ENCODE measurements at regions of chr6 and their contacts with region 1.

Region 1: GRCh38 chr6:87472525-87473418 is at the start of gene SLC35A1:
- DNase-seq: peak; percentile 76 to 93 (median 86)
- H3K4me3 ChIP-seq: peak within 1 kb of the TSS; percentile 58 to 99 (median 89)
- H3K27ac ChIP-seq: peak within 1 kb of the TSS; percentile 65 to 99 (median 93)
- H3K27me3 ChIP-seq: no peaks in the 10 kb centered on the region
- CTCF ChIP-seq: peak in 49 of 56 donors; percentile 6 to 69 (median 44)
- total RNA-seq, gene SLC35A1: 9.8 to 34.1 (median 22.8) TPM

Region 2: GRCh38 chr6:87241307-87241706 is 231.5 kb before region 1 on chr6:
- intact Hi-C with region 1: no loop called
- DNase-seq: no peak
- H3K4me3 ChIP-seq: no peak overlapping the region
- H3K27ac ChIP-seq: no peak overlapping the region
- H3K27me3 ChIP-seq: no peaks in the 10 kb centered on the region
- CTCF ChIP-seq: no peak

Region 3: DNA sequence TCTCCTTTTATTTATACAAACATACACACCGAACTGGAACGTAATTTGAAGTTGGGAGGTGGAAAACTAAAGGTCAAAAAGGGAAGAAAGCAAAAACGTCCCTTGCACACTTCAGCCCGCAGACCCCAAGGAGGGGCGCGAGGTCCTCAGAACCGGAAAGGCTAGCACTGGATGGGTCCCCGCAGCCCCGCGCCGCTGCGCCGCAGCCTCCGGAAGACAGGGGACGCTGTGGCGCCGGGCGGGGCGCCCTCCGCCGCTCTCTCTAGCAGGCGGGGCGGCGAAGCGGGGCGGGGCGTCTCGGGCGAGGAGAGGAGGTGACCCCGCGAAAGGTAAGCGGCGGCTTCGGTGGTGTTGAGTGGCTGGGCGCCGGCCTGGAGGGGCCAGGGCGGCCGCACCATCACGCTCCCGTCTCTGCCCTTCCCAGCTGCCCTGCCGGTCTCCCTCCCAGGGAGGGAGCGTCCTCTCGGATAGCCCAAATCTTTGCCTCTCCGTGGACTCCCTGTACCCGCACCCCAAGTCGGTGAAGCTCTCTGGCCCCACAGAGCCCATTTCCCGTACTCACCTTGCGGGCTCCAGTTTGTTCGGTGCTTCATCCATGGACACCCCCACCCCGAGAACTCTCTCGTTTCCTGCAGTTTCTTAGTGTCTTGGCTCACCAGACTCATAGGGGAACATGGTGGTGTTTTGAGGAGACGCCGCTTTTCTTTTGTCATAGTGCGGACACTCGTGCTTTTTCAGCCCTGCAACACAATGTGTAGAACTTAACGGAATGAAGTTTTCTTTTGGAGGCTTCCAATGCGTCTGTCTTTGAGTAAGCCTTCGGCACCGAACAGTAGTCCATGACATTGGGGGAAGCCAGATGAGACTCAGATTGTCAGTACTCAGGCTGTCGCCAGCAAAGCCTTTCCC is 150.2 kb before region 1 on chr6 and contains the start of gene SMIM8:
- intact Hi-C with region 1: loop called (anchors 5 kb)
- DNase-seq: peak; percentile 55 to 87 (median 70)
- H3K4me3 ChIP-seq: peak within 1 kb of the TSS; percentile 68 to 99 (median 92)
- H3K27ac ChIP-seq: peak within 1 kb of the TSS in 46 of 59 donors; percentile 22 to 84 (median 66)
- H3K27me3 ChIP-seq: no peaks in the 10 kb centered on the region
- CTCF ChIP-seq: peak; percentile 73 to 99 (median 95)
- total RNA-seq, gene SMIM8: 13.3 to 35.0 (median 23.2) TPM

Region 4: GRCh38 chr6:87407901-87408720 is 64.7 kb before region 1 on chr6 and contains the start of gene CFAP206:
- intact Hi-C with region 1: loop called (anchors 2 to 5 kb)
- DNase-seq: peak; percentile 51 to 84 (median 74)
- H3K4me3 ChIP-seq: peak within 1 kb of the TSS; percentile 64 to 98 (median 92)
- H3K27ac ChIP-seq: peak within 1 kb of the TSS; percentile 24 to 95 (median 85)
- H3K27me3 ChIP-seq: no peaks in the 10 kb centered on the region
- CTCF ChIP-seq: peak in 23 of 56 donors; percentile 6 to 45 (median 26)
- total RNA-seq, gene CFAP206: 0.82 to 5.3 (median 3.2) TPM

Region 5: GRCh38 chr6:87701676-87702588 is 229.2 kb after region 1 on chr6 and contains the start of gene AKIRIN2:
- intact Hi-C with region 1: loop called (anchors 2 to 10 kb)
- DNase-seq: peak; percentile 93 to 97 (median 96)
- H3K4me3 ChIP-seq: peak within 1 kb of the TSS; percentile 61 to 98 (median 93)
- H3K27ac ChIP-seq: peak within 1 kb of the TSS; percentile 79 to 100 (median 98)
- H3K27me3 ChIP-seq: no peaks in the 10 kb centered on the region
- CTCF ChIP-seq: peak in 9 of 56 donors; percentile 3 to 41 (median 13)
- total RNA-seq, gene AKIRIN2: 38.8 to 78.6 (median 58.0) TPM